ENCODE measurements at regions of chr6 and their contacts with region 1.

Region 1: GRCh38 chr6:89035252-89036106 is 45.1 kb upstream of the PNRC1 start:
- DNase-seq: peak; percentile 89 to 98 (median 92)
- H3K4me3 ChIP-seq: no peak overlapping the region
- H3K27ac ChIP-seq: peak overlapping the region; percentile 74 to 85
- H3K4me1 ChIP-seq: peaks cover 2% of the 10 kb centered on the region
- H3K27me3 ChIP-seq: no peaks in the 10 kb centered on the region
- CTCF ChIP-seq: peak in 1 of 3 donors; percentile 23
- EP300 ChIP-seq: peak; percentile 98
- POLR2A ChIP-seq: peak; percentile 44

Region 2: GRCh38 chr6:88989215-88989614 is 46.3 kb before region 1 on chr6:
- intact Hi-C with region 1: no loop called
- DNase-seq: peak in 1 of 5 donors; percentile 25
- H3K4me3 ChIP-seq: no peak overlapping the region
- H3K27ac ChIP-seq: no peak overlapping the region
- H3K4me1 ChIP-seq: no peaks in the 10 kb centered on the region
- H3K27me3 ChIP-seq: no peaks in the 10 kb centered on the region
- CTCF ChIP-seq: no peak
- EP300 ChIP-seq: no peak
- POLR2A ChIP-seq: no peak

Region 3: DNA sequence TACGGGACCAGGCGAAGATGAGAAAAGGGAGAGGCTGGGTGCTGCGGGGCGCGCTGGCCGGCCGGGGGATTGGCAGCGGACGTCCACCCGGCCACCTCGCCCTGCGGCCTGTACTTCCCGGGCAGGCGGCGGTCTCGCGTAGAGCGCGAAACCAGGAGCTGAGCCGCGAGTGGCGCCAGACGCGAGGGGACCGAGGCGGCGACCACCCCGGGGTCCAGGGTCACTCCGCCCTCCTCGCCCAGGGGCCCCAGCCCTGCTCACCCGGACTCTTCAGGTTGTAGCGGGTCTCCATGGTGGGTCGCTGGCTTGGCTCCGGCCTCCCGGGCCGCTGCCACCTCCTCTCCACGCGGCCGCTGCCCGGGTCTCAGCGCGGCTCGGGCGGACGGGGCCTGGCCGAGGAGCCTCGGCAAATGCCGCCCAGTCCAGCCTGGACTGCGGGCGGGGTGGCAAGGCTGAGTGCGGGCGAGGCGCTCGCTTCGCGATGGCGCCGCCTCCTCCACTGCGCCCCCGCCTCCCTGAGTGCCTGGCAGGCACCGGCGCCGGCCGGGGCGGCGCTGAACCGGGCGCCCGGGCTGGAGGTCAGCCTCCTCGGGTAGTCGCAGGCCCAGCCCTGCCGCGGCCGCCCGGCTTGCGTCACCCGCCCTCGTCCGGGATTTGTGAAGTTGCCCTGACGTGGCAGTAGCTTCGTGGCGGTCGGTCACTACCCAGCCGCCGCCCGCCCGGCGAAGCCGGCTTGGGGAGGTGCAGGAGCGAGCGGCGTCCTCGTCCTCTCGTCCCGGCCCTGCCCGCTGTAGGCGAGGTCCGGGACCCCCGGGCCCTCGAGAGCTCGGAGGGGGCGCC is 317.0 kb after region 1 on chr6 and contains the start of gene UBE2J1:
- intact Hi-C with region 1: loop called in 1 of 4 experiments (anchors 5 kb)
- DNase-seq: peak; percentile 86 to 93 (median 91)
- H3K4me3 ChIP-seq: peak within 1 kb of the TSS; percentile 70
- H3K27ac ChIP-seq: peak within 1 kb of the TSS; percentile 93 to 99
- H3K4me1 ChIP-seq: peaks cover 11% of the 10 kb centered on the region
- H3K27me3 ChIP-seq: no peaks in the 10 kb centered on the region
- CTCF ChIP-seq: peak in 1 of 3 donors; percentile 18
- EP300 ChIP-seq: peak; percentile 14
- POLR2A ChIP-seq: peak; percentile 80
- total RNA-seq, gene UBE2J1: 25.3 to 48.6 (median 35.8) TPM